Activated T-helper 1 cell treated with anti-CD3 and anti-CD28 coated beads, Interleukin-12 subunit alpha, Interleukin-12 subunit beta, Interleukin-2, Interleukin-4 antibody, amounts not matched to agents 30 ng/mL and 10 ng/mL and 1 ng/mL, durations not matched to agents 14 hours and 24 hours and 36 hours (primary cell): ENCODE measurements at regions of chr1 and their contacts with region 1.

Region 1: DNA sequence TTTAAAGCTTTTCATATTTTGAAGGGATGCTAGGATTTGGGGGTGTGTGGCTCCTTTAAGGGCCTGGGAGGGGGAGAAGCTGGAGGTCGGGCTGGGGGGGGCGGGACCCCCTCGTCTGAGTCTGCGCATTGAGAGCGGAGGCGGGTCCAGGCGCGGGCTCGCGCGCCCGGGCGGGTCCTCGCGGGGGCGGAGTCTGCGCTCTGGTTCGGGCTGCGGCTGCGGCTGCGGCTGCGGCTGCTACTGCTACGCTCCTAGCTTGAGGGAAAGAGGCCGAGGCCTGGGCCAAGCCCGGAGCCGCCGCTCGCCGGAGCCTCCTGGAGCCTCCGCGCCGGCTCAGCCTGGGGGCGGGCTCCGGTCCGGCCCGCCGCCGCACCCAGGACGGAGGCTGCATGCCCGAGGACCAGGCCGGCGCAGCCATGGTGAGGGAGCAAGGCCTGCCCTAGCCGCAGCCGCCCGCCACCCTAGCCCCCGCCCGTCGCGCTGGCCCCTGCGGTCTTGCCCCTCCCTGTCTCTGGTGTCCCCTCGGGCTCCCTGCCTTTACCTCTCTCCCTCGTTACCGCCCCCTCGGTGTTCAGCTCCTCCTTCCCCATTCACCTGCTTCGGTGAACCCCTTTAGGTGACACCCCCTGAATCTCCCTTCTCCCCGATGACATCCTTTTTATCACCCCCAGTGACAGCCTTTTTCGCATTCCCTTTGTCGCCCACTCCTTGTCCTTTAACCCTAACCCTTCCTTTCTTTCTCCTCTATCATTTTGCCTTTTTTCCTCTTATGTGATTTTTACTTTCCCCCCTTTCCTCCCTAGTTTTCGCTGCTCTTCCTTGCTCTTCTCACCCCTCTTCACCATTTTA is at the start of gene ZYG11B:
- DNase-seq: peak; percentile 88
- H3K4me3 Mint-ChIP-seq: peak within 1 kb of the TSS; percentile 88
- H3K27ac Mint-ChIP-seq: peak within 1 kb of the TSS; percentile 82
- H3K4me1 Mint-ChIP-seq: peaks cover 42% of the 10 kb centered on the region
- H3K27me3 Mint-ChIP-seq: no peaks in the 10 kb centered on the region
- total RNA-seq, gene ZYG11B: 8.4 and 8.5 TPM in 2 replicates

Region 2: DNA sequence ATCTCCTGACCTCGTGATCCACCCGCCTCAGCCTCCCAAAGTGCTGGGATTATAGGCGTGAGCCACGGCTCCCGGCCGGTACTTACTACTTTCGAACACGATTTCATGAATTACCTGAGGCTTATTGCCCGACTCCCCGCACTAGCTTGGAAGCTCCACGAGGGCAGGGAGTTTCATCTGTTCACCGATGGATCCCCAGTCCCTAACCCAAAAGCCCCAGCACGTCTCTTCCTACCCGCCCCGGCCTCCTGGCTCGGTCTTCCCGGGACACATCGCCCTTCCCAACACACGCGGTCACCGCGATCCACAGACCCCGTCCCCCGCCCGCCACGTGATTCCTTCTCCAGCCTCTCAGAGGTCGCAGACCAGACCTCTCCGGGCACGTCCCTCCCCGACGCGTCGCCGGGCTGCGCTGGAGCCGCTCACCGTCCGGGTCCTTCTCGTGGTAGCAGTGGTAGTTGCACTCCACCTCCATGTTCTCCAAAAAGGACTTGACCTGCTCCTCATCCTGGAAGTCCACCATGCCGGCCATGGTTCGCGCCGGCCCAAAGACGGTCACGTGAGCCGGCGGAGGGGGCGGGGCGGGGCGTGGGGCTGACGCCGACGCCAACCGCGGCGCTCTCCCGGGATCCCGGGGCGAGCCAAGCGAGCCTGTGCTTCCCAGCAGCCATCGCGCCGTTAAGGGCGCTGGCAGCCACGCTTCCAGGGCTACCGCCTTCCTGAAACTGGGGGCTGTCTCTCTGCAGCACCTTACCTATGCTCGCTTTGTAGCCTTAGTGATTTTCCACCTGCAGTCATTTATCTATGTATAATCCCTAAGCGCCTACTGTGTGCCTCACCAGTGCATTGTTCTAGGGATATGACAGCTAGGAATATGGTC is 28.5 kb before region 1 on chr1 and contains the start of gene COA7:
- intact Hi-C with region 1: loop called (anchors 1 kb)
- DNase-seq: peak; percentile 62
- H3K4me3 Mint-ChIP-seq: peak within 1 kb of the TSS; percentile 95
- H3K27ac Mint-ChIP-seq: peak within 1 kb of the TSS; percentile 89
- H3K4me1 Mint-ChIP-seq: peaks cover 41% of the 10 kb centered on the region
- H3K27me3 Mint-ChIP-seq: peaks cover 4% of the 10 kb centered on the region
- total RNA-seq, gene COA7: 37.6 and 39.9 TPM in 2 replicates

Region 3: GRCh38 chr1:52842643-52843309 is 116.3 kb after region 1 on chr1 and contains the start of gene ZYG11A:
- intact Hi-C with region 1: loop called (anchors 1 kb)
- DNase-seq: peak; percentile 75
- H3K4me3 Mint-ChIP-seq: peak within 1 kb of the TSS; percentile 77
- H3K27ac Mint-ChIP-seq: no peak within 1 kb of the TSS
- H3K4me1 Mint-ChIP-seq: peaks cover 8% of the 10 kb centered on the region
- H3K27me3 Mint-ChIP-seq: peaks cover 34% of the 10 kb centered on the region
- total RNA-seq, gene ZYG11A: 0.22 and 0.26 TPM in 2 replicates

Region 4: DNA sequence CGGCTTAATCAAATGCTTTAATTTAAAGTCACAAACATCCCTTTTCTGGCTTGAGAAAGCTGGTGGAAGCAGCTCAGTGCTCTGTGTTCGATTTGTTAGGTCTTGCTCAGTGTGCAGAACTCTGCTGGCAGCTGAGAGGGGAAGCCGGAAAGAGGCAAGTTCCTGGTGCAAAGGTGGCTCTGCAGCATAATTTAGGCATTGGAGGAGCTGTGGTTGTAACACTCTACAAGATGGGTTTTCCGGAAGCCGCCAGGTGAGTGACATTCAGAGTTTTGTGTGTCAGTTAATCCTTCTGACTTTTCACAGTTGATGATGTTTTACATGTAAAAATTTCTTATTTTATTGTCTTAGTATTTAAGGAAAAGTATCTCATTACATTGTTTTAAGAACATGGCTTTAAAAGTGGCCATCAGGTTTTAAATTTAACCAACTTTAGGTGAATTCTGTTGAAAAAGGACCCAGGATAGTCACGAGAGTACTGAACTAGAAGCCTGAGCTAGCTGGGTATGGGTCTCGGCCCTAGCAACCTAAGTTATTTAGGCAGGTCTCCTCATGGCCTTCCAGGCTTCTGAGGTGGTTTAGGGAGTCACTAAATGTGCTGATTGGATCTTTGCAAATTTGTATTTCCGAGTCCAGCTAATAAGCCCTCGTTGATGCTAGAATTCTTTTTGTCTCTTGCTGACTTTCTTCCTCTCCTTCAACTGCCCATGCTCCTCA is 288.5 kb after region 1 on chr1:
- intact Hi-C with region 1: loop called (anchors 1 kb)
- DNase-seq: peak; percentile 78
- H3K4me3 Mint-ChIP-seq: peak overlapping the region; percentile 91
- H3K27ac Mint-ChIP-seq: peak overlapping the region; percentile 61
- H3K4me1 Mint-ChIP-seq: peaks cover 23% of the 10 kb centered on the region
- H3K27me3 Mint-ChIP-seq: no peaks in the 10 kb centered on the region